CD4-positive, alpha-beta T cell (primary cell): ENCODE measurements at regions of chr20 and their contacts with region 1.

Region 1: DNA sequence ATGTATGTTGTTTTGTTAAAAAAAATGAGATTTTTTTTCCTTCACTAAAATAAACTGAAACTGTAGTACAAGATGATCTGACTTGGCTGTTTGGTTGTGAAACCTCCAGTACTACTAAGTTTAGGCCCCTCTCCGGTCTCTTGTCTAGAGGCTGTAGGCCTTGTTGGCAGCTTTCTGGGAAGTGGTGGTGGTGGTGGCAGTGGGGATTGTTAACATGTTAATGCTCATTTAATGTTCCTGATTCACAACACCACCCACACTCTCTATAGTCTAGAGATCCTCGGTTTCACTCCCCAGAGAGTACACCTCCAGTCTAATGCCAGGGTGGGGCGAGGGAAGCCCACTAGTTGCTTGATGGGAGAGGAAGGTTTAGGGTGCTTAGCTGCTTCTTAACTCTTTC is 24.1 kb downstream of the STK4 start:
- DNase-seq: peak in 4 of 14 experiments; percentile 22 to 46 (median 27)
- ATAC-seq: peak; percentile 50
- H3K4me3 ChIP-seq: peak overlapping the region; percentile 45
- H3K4me3 Mint-ChIP-seq: peak overlapping the region; percentile 88
- H3K27ac ChIP-seq: peak overlapping the region; percentile 62 to 66
- H3K27ac Mint-ChIP-seq: peak overlapping the region; percentile 88
- H3K4me1 ChIP-seq: peaks cover 41% of the 10 kb centered on the region
- H3K4me1 Mint-ChIP-seq: peaks cover 82% of the 10 kb centered on the region
- H3K27me3 ChIP-seq: no peaks in the 10 kb centered on the region
- H3K27me3 Mint-ChIP-seq: no peaks in the 10 kb centered on the region
- CTCF ChIP-seq: no peak

Region 2: DNA sequence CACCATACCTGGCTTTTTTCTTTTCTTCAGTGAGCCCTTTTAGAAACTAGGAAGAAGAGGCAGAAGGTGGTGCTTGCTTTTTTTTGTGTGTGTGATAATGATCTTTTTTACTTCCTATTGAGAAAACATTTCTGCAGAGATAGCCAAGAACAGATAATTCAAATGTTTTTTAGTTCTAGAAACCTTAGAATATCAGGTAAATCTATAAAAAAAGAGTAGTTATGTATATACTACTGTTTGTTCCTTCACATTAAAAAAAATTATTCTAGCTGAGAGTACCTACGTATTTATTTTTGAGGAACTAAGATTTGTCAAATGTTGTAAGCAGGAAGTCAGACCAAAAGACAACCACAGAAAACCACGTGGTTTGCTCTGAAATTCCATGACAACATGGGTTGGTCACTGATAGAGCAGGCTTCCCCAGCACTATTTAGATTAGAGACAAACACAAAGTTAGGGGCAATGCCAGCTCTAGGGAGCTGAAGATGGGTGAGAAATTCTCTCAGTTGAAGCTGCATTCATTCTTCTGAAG is 11.3 kb before region 1 on chr20:
- CTCF ChIA-PET with region 1: interaction called, 7 read pairs
- POLR2A ChIA-PET with region 1: interaction called, 16 read pairs
- intact Hi-C with region 1: no loop called
- DNase-seq: peak in 13 of 14 experiments; percentile 35 to 94 (median 49)
- ATAC-seq: peak; percentile 85
- H3K4me3 ChIP-seq: peak overlapping the region; percentile 34
- H3K4me3 Mint-ChIP-seq: peak overlapping the region; percentile 83
- H3K27ac ChIP-seq: peak overlapping the region; percentile 90 to 95
- H3K27ac Mint-ChIP-seq: peak overlapping the region; percentile 96
- H3K4me1 ChIP-seq: peaks cover 56% of the 10 kb centered on the region
- H3K4me1 Mint-ChIP-seq: peaks cover 93% of the 10 kb centered on the region
- H3K27me3 ChIP-seq: no peaks in the 10 kb centered on the region
- H3K27me3 Mint-ChIP-seq: no peaks in the 10 kb centered on the region
- CTCF ChIP-seq: no peak